ENCODE measurements at regions of chr2 and their contacts with region 1.

Region 1: GRCh38 chr2:171160119-171160955 is at the start of gene TLK1:
- DNase-seq: peak; percentile 87
- ATAC-seq: peak; percentile 64
- H3K4me3 Mint-ChIP-seq: peak within 1 kb of the TSS; percentile 95
- H3K27ac Mint-ChIP-seq: peak within 1 kb of the TSS; percentile 98
- H3K4me1 Mint-ChIP-seq: peaks cover 59% of the 10 kb centered on the region
- H3K27me3 Mint-ChIP-seq: no peaks in the 10 kb centered on the region
- total RNA-seq, gene TLK1: 71.8 to 83.7 TPM

Region 2: DNA sequence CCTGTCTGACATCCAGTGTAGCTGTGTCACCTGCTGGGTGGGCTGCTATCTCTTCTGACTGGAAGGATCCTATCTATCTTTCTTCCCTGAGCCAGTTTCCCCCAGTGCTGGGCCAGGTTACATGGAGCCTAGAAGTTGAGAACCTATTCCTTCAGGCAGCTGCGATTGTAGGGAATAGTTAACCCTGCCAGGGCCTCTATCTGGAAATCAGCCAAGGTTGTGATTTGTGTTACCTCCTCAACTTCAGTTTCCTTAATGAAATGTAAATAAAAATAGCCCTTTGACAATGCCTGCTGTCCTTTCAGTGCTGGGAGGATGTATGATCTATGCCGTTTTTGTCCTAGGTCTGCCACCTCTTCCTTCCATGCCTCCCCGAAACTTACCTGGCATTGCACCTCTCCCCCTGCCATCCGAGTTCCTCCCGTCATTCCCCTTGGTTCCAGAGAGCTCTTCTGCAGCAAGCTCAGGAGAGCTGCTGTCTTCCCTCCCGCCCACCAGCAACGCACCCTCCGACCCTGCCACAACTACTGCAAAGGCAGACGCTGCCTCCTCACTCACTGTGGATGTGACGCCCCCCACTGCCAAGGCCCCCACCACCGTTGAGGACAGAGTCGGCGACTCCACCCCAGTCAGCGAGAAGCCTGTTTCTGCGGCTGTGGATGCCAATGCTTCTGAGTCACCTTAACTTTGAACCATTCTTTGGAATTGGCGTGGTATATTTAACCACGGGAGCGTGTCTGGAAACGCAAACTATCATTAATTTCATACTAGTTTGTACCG is 194.7 kb before region 1 on chr2:
- CTCF ChIA-PET with region 1: no interaction called
- POLR2A ChIA-PET with region 1: no interaction called
- intact Hi-C with region 1: loop called in 1 of 2 experiments (anchors 1 kb)
- DNase-seq: no peak
- ATAC-seq: no peak
- H3K4me3 Mint-ChIP-seq: no peak overlapping the region
- H3K27ac Mint-ChIP-seq: no peak overlapping the region
- H3K4me1 Mint-ChIP-seq: no peaks in the 10 kb centered on the region
- H3K27me3 Mint-ChIP-seq: no peaks in the 10 kb centered on the region

Region 3: GRCh38 chr2:171042253-171042969 is 117.9 kb before region 1 on chr2:
- CTCF ChIA-PET with region 1: interaction called, 3 read pairs
- POLR2A ChIA-PET with region 1: no interaction called
- intact Hi-C with region 1: loop called in 1 of 2 experiments (anchors 5 kb)
- DNase-seq: no peak
- ATAC-seq: no peak
- H3K4me3 Mint-ChIP-seq: no peak overlapping the region
- H3K27ac Mint-ChIP-seq: peak overlapping the region; percentile 87
- H3K4me1 Mint-ChIP-seq: peaks cover 35% of the 10 kb centered on the region
- H3K27me3 Mint-ChIP-seq: no peaks in the 10 kb centered on the region

Region 4: GRCh38 chr2:171141320-171141719 is 19.0 kb before region 1 on chr2:
- CTCF ChIA-PET with region 1: interaction called, 20 read pairs
- POLR2A ChIA-PET with region 1: interaction called, 3 read pairs
- intact Hi-C with region 1: loop called (anchors 2 kb)
- DNase-seq: no peak
- ATAC-seq: peak; percentile 73
- H3K4me3 Mint-ChIP-seq: no peak overlapping the region
- H3K27ac Mint-ChIP-seq: peak overlapping the region; percentile 6
- H3K4me1 Mint-ChIP-seq: peaks cover 84% of the 10 kb centered on the region
- H3K27me3 Mint-ChIP-seq: no peaks in the 10 kb centered on the region

Region 5: DNA sequence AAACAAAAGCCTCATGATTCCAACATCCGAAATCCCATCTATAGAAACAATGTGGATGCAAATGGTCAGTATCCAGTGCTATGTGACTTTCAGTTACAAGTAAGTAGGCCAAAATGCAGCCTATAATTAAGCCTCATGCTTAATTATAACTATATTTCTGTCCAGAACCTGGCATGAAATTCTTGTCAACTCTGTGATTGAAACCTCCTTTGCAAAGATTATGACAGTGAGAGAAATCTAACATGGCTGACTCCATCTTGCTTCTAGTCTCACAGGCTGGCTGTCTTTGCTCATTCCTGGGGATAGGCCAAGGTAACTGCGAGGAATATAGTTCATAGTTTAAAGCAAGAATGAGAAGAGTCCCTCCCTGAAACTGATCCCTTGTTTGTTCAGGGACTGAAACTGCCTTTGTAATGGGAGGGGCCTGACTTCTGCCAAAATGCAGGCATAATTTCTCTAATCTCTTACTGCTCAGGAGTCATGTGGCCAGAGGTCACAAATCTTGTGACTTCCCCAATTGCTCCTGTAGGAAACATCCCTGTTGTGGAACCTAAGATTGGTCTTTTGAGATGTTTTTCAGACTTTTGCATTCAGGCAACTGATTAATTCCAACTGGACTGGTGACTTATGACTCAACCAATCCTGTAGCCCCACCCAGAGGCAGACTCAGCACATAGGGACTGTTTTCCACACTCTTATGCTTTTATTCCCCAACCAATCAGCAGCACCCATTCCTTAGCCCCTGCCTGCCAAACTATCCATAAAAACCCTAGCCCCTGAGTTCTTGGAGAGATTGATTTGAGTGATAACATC is 84.8 kb after region 1 on chr2:
- CTCF ChIA-PET with region 1: no interaction called
- POLR2A ChIA-PET with region 1: no interaction called
- intact Hi-C with region 1: loop called in 1 of 2 experiments (anchors 5 kb)
- DNase-seq: no peak
- ATAC-seq: no peak
- H3K4me3 Mint-ChIP-seq: no peak overlapping the region
- H3K27ac Mint-ChIP-seq: no peak overlapping the region
- H3K4me1 Mint-ChIP-seq: peaks cover 42% of the 10 kb centered on the region
- H3K27me3 Mint-ChIP-seq: no peaks in the 10 kb centered on the region

Region 6: GRCh38 chr2:171433763-171434670 is 273.7 kb after region 1 on chr2 and contains the starts of genes DCAF17 and METTL8:
- CTCF ChIA-PET with region 1: interaction called, 5 read pairs
- POLR2A ChIA-PET with region 1: interaction called, 7 read pairs
- intact Hi-C with region 1: loop called (anchors 1 kb)
- DNase-seq: peak; percentile 97
- ATAC-seq: peak; percentile 91
- H3K4me3 Mint-ChIP-seq: peak within 1 kb of the TSS; percentile 93
- H3K27ac Mint-ChIP-seq: peak within 1 kb of the TSS; percentile 95
- H3K4me1 Mint-ChIP-seq: peaks cover 50% of the 10 kb centered on the region
- H3K27me3 Mint-ChIP-seq: no peaks in the 10 kb centered on the region
- total RNA-seq, gene DCAF17: 18.3 TPM
- total RNA-seq, gene METTL8: 39.5 to 47.9 TPM